ENCODE measurements at regions of chr9 and their contacts with region 1.

Region 1: DNA sequence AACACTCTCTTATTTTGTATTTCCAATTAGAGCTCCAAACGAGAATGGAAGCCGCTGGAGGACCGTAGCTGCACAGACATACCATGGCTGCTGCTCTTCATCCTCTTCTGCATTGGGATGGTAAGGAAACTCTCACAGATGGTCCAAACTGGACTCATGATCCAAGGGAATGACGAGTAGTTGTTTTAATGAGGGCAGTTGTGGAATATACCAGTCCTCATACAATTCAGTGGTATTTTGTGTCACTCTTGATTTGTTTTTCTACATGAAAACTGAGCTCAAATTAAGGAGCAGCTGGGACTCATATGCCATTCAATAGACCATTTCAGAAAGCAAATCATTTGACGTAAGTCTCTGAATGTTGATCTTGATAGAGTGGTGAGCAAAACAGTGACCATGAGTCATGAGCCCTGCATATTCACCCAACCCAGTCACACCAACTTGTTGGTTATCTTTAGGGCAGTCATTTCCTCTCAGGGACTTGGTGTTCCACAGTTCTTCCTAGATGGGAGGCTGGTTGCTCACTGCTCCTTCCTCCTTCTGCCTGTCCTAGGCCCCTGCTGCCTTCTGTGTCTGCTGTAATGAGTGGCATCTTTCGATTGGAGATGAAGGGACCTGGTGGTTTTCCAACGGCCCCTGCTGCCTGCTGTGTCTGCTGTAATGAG is 54.9 kb downstream of the SLC44A1 start:
- DNase-seq: no peak
- H3K4me3 Mint-ChIP-seq: no peak overlapping the region
- H3K27ac Mint-ChIP-seq: peak overlapping the region; percentile 42
- H3K4me1 Mint-ChIP-seq: peaks cover 22% of the 10 kb centered on the region
- H3K27me3 Mint-ChIP-seq: peaks cover 1% of the 10 kb centered on the region

Region 2: GRCh38 chr9:105244003-105244733 is 55.2 kb before region 1 on chr9 and contains the start of gene SLC44A1:
- intact Hi-C with region 1: no loop called
- DNase-seq: peak; percentile 98
- H3K4me3 Mint-ChIP-seq: peak within 1 kb of the TSS; percentile 88
- H3K27ac Mint-ChIP-seq: peak within 1 kb of the TSS; percentile 74
- H3K4me1 Mint-ChIP-seq: peaks cover 22% of the 10 kb centered on the region
- H3K27me3 Mint-ChIP-seq: peaks cover 73% of the 10 kb centered on the region
- total RNA-seq, gene SLC44A1: 2.5 and 2.9 TPM in 2 replicates

Region 3: DNA sequence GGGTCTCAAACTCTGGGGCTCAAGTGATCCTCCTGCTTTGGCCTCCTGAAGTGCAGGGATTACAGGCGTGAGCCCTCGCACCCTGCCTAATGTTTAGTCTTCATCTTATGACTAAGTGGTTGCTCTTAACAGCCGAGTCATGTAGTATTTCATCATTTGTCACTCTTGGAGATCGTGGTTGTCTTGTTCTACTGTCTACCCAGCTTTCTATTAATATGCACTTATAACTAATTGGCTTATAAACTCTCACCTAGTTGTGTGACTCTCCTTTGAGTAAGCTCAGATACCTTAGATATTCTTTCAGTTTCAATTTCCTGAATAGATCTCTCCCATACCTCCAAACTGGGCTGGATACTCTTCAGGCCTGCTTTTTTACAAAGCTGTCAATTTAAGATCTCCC is 34.9 kb before region 1 on chr9:
- intact Hi-C with region 1: loop called (anchors 5 kb)
- DNase-seq: no peak
- H3K4me3 Mint-ChIP-seq: peak overlapping the region; percentile 27
- H3K27ac Mint-ChIP-seq: peak overlapping the region; percentile 45
- H3K4me1 Mint-ChIP-seq: peaks cover 21% of the 10 kb centered on the region
- H3K27me3 Mint-ChIP-seq: no peaks in the 10 kb centered on the region

Region 4: GRCh38 chr9:105341434-105342144 is 42.3 kb after region 1 on chr9:
- intact Hi-C with region 1: loop called (anchors 2 kb)
- DNase-seq: no peak
- H3K4me3 Mint-ChIP-seq: peak overlapping the region; percentile 5
- H3K27ac Mint-ChIP-seq: no peak overlapping the region
- H3K4me1 Mint-ChIP-seq: peaks cover 20% of the 10 kb centered on the region
- H3K27me3 Mint-ChIP-seq: peaks cover 3% of the 10 kb centered on the region

Region 5: DNA sequence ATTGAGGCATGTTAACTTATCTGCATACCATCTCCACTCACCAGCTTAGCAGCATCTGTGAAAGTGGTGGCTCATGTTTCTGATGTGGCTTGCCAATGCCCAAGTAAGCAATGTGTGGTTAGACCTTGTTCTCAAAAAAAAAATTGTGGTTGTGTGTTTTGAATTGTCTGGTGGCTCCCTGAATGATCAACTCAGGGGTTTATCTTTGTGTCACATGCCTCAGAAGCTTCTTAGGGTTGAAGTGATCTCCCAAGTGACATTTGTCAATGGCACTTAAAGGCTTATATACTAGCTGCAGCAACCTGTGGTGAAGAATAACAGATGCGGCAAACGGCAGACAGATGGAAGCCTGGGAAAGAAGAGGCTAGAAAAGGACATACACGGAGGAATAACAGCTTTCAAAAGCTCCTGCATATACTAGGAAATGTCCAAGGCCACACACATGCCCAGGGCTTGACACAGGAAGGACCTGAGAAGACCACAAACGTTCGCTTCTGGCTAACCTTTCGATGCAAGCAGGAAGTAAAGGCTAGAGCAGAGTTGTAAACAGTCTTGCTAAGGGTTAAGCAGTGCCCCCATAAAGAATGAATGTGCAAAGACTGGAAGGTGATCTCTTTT is 106.3 kb after region 1 on chr9:
- intact Hi-C with region 1: loop called (anchors 5 kb)
- DNase-seq: peak; percentile 90
- H3K4me3 Mint-ChIP-seq: peak overlapping the region; percentile 65
- H3K27ac Mint-ChIP-seq: peak overlapping the region; percentile 80
- H3K4me1 Mint-ChIP-seq: peaks cover 28% of the 10 kb centered on the region
- H3K27me3 Mint-ChIP-seq: peaks cover 73% of the 10 kb centered on the region

Measured in activated CD4-positive, alpha-beta T cell treated with anti-CD3 and anti-CD28 coated beads, Interleukin-2, amount 10 ng/mL, durations not matched to agents 24 days and 14 days (primary cell).